ENCODE measurements at regions of chr4 and their contacts with region 1.

Region 1: GRCh38 chr4:112153211-112153791 is 8.0 kb downstream of the FAM241A start:
- DNase-seq: no peak
- H3K4me3 Mint-ChIP-seq: peak overlapping the region; percentile 38
- H3K27ac Mint-ChIP-seq: peak overlapping the region; percentile 49
- H3K4me1 Mint-ChIP-seq: peaks cover 51% of the 10 kb centered on the region
- H3K27me3 Mint-ChIP-seq: no peaks in the 10 kb centered on the region

Region 2: DNA sequence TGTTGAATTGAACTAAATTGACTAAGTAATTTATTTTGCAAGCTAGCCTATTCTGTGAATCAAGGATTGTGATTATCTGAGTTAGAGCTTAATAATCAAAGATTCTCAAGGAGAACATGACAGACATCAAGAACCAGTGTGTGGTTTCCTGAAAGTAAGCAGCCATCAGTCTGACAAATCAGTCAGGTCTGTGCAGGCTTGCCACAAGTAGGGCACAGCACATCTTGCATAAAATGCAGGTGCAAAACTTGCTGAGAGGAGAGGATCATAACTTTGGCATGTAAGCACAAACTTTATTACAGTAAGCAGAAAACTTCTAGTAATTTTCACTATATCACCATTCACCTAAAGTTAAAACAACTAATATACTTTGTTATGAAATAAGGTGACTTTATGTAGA is 14.5 kb after region 1 on chr4:
- CTCF ChIA-PET with region 1: no interaction called
- POLR2A ChIA-PET with region 1: no interaction called
- intact Hi-C with region 1: loop called (anchors 2 kb)
- DNase-seq: peak; percentile 36
- H3K4me3 Mint-ChIP-seq: no peak overlapping the region
- H3K27ac Mint-ChIP-seq: no peak overlapping the region
- H3K4me1 Mint-ChIP-seq: peaks cover 35% of the 10 kb centered on the region
- H3K27me3 Mint-ChIP-seq: no peaks in the 10 kb centered on the region

Region 3: GRCh38 chr4:112185334-112185733 is 32.0 kb after region 1 on chr4:
- CTCF ChIA-PET with region 1: no interaction called
- POLR2A ChIA-PET with region 1: no interaction called
- intact Hi-C with region 1: loop called (anchors 2 kb)
- DNase-seq: no peak
- H3K4me3 Mint-ChIP-seq: no peak overlapping the region
- H3K27ac Mint-ChIP-seq: no peak overlapping the region
- H3K4me1 Mint-ChIP-seq: peaks cover 30% of the 10 kb centered on the region
- H3K27me3 Mint-ChIP-seq: no peaks in the 10 kb centered on the region